ENCODE measurements at regions of chr4 and their contacts with region 1.

Region 1: DNA sequence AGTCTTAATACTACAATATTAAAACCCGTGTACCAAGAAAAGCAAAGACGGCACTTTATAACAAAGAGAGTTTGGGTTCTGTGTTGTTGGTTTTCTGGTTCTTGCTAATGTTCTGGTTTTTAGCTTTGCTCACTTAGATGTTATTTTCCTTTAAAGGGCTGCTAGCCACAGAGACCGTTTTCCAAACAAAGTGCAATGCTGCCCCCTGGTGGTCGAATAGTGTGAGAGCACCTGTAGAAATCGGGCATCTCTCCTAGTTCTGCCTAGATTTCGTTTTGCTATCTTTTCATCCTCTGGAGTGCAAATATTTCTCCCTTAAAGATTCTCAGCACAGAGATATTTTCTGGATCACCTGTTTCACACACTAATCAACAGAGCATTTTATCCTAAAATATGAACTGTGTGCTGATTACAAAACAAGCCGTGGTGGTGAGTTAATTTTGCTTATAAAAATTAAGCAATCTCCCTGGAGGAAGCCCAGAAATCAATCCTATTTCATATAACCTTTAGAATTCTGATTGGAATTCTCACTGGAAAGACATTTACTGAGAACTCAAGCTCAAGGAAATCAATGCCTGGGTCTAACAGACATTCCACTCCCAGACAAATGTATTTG is 334.5 kb upstream of the NOCT start:
- DNase-seq: peak; percentile 79 to 97 (median 89)

Region 2: GRCh38 chr4:137124278-137124932 is 1556.7 kb before region 1 on chr4:
- intact Hi-C with region 1: loop called (anchors 2 kb)
- DNase-seq: no peak

Region 3: DNA sequence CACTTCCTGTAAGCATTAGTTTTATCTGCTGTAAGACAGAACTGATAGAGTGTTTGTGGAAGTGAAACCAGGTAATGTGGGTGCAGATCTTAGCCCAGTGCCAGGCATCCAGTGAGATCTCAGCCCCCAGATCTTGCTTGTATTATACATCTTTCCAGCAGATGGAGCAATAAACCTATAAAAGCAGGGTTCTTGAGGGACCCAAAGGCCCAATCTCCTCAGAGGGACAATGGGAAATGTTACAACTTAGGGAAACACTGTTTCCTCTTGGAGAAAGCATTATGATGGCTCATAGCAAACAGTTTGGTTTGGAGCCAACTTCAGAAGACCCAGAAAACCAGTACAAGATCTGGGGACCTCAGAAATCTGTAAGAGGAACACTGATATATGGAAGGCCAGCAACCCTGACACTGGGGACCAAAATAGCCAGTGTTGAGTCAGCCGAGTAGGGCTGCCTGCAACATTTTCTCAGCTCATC is 645.3 kb before region 1 on chr4:
- intact Hi-C with region 1: loop called (anchors 1 kb)
- DNase-seq: no peak

Region 4: DNA sequence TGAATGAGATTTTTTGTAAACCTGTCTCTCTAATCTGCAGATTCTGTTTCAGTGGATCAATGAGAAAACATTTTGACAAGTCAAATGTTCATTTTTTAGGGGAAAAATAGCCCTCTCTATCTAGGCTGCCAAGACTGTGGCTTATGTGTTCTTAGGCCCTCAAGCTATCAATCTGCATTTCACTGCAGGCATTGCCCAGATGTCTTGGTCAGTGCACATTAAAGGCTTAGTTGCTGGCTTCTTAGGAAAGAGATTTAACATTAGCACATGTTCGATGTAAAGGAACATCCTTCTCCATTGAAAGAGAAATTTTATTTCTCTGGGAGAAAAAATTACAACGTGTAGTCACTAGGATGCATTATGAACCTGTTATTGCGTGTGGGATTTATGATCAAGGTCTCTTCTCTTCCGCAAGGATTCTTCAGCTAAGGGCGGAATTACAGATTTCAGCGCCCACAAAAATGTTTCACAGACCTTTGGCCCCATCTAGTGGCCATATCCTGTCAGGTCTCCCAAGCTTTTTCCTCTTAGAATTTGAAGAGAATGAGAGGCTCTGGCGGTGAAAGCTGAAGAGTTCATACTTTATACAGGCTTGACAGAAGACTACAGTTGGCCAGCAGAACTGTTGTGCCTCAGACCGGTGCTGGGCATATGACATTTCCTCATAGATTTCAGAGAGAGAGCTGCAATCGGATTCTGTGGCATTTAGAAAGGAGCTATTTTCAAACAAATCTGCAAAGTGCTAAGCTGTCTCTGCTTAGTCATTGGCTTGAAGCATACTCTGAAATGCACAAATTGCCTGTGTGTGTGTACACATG is 189.8 kb after region 1 on chr4:
- intact Hi-C with region 1: loop called (anchors 5 kb)
- DNase-seq: peak in 9 of 10 donors; percentile 31 to 89 (median 73)